WTC11 (cell line): ENCODE measurements at regions of chr1 and their contacts with region 1.

Region 1: DNA sequence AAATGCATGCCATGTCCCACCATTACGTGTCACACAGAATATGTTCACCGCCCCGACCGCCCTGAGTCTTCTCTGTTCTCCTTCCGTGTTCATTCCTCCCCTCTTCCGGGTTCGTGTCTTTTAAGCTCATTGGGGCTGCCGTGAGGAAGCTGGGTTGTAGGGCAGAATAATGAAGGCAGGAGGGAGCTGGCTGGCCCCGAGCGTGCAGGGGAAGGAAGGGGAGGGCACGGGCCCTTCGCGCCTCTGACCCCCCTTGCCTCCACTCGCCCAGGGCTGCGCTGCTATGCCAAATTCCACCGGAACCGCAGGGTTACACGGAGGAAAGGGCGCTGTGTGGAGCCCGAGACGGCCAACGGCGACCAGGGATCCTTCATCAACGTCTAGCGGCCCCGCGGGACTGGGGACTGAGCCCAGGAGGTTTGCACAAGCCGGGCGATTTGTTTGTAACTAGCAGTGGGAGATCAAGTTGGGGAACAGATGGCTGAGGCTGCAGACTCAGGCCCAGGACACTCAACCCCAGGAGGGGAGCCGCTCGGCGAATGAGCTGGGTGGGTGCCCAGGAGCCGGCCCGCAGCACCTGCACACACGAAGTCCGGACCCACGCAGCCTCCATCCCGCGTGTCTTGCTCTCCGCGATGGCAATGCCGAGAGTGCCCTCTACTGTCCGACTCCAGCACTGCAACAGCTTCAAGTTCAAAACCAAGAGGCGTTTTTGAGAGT is 16.5 kb upstream of the AGTRAP start:
- DNase-seq: peak; percentile 81
- ATAC-seq: peak; percentile 75
- H3K4me3 Mint-ChIP-seq: peak overlapping the region; percentile 51
- H3K27ac Mint-ChIP-seq: no peak overlapping the region
- H3K4me1 Mint-ChIP-seq: peaks cover 9% of the 10 kb centered on the region
- H3K27me3 Mint-ChIP-seq: no peaks in the 10 kb centered on the region; the same call in 1 of the 2 replicates
- CTCF ChIP-seq: peak; percentile 96

Region 2: DNA sequence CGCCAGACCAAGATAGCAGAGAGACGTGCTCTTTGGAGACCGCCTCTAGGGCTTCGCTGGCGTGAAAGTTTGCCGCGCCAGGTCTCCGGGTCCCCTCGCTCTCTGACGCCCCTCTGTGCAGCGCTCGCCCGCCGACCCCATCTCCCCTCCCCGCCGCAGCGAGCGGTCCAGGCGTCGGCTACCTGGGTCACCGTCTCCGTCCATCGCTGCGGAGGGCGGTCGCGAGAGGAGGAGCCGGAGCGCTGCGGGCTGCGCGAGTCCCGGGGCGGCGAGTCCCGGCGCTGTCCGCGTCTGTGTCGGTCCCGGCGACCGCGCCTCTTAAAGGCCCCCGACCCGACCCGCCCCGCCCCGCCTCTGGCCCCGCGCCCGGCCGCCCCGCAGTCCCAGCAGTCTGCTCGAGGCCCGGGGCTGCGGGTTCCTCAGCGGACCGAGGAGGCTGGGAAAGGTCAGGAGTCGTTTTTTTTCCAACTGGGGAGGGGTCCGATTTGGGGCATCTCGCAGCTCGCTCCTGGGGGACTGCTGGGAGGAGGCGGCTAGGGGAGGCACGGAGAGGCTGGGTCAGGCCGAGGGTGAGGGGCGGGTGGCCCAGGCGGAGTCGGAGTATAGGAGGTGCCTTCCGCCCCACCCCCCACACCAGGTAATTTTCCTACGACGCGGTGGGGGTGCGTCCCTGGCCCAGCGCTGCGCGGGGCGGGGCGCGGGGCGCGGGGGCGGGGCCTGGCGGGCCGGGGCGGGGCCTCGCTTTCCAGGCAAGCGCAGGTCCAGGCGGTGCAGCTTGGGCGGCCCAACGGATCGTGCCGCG is 65.1 kb before region 1 on chr1 and contains the starts of genes FBXO2 and FBXO44:
- CTCF ChIA-PET with region 1: interaction called, 22 read pairs
- POLR2A ChIA-PET with region 1: interaction called, 3 read pairs
- DNase-seq: peak; percentile 88
- ATAC-seq: peak; percentile 69
- H3K4me3 Mint-ChIP-seq: peak within 1 kb of the TSS; percentile 74
- H3K27ac Mint-ChIP-seq: no peak within 1 kb of the TSS
- H3K4me1 Mint-ChIP-seq: peaks cover 33% of the 10 kb centered on the region
- H3K27me3 Mint-ChIP-seq: peaks cover 22% of the 10 kb centered on the region
- CTCF ChIP-seq: no peak
- total RNA-seq, gene FBXO2: 58.2 to 68.2 TPM (median 63.7 TPM) in 3 replicates
- total RNA-seq, gene FBXO44: 34.9 to 45.6 TPM (median 40.6 TPM) in 3 replicates

Region 3: DNA sequence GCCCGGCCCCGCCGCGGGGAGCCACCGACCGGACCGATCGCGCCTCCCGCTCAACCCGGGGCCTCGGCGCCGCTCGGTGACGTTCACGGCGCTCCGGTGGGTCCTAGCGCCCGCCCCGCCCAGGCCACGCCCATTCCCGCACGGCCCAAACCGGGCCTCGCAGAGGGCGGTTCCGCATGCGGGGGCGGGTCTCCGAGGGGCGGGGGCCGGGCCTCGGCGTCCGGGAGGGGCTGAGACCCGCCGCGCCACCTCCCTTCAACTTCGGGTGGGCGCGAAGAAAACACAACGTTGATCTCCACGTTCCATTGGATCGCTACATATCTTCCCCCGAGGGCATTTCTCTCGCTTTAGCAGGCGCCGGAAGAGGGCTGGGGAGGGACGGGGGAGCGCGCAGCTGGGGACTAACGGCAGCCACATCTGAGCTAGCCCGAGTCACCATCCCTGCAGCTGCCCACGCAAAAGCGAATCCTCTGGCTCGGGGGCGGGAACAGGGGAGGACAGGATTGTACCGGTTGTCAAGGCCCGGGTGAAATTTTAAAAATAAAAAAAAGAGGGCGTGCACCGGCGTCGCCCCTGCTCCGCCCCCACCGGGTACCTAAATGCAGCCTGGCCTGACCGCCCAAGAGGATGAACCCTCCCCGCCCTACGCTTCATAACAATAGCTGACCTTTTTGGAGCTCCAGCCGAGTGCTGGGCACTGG is 38.3 kb before region 1 on chr1 and contains the start of gene MAD2L2:
- CTCF ChIA-PET with region 1: interaction called, 29 read pairs
- POLR2A ChIA-PET with region 1: interaction called, 3 read pairs
- DNase-seq: peak; percentile 86
- ATAC-seq: peak; percentile 54
- H3K4me3 Mint-ChIP-seq: peak within 1 kb of the TSS; percentile 83
- H3K27ac Mint-ChIP-seq: peak within 1 kb of the TSS; percentile 100
- H3K4me1 Mint-ChIP-seq: peaks cover 61% of the 10 kb centered on the region
- H3K27me3 Mint-ChIP-seq: no peaks in the 10 kb centered on the region
- CTCF ChIP-seq: no peak
- total RNA-seq, gene MAD2L2: 283 to 312 TPM (median 305 TPM) in 3 replicates

Region 4: DNA sequence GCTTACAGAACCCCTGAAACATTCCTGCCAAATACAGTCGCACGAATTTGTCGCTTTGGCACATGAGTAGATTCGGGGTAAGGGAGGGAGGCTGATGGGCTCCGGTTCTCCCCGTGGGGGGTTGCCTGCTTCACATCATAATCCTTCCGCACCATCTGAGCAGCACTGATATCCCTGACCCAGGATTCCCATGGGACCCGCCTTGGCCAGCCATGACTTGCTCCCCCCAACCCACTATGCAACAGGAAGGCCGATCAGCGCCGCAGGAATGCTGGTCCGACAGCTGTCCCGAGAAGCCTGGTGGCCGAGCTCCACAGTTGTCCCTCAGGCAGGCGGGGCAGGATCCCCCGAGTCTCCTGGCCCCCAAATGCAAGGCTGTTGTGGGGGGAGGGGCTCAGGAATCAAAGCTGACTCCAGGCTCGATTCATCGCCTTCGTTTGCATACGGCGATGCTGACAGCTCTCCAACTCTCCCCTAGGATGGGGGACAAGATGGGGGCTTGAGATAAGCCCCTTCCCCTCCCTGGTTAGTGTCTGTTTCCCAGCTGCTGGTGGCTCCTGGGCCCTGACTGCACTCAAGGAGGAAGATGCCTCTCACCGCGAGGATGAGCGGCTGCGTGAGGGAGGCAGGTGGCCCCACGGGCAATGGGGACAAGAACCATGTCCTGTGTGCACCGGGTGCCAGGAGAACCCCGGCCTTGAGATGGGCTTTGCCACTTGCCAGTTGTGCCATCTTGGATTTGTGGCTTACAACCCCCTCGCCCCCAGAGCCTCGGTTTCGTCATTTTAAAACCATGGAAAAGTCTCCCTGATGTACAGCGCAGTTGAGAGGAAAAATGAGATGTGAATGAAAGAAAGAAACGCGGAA is 18.6 kb before region 1 on chr1:
- CTCF ChIA-PET with region 1: interaction called, 13 read pairs
- POLR2A ChIA-PET with region 1: interaction called, 5 read pairs
- DNase-seq: peak; percentile 42
- ATAC-seq: no peak
- H3K4me3 Mint-ChIP-seq: 0 out of 2 replicates have a peak overlapping the region, but pooled peaks have one; percentile 7
- H3K27ac Mint-ChIP-seq: no peak overlapping the region
- H3K4me1 Mint-ChIP-seq: peaks cover 51% of the 10 kb centered on the region
- H3K27me3 Mint-ChIP-seq: no peaks in the 10 kb centered on the region
- CTCF ChIP-seq: no peak

Region 5: GRCh38 chr1:11735854-11736745 is 16.6 kb after region 1 on chr1 and contains the start of gene AGTRAP:
- CTCF ChIA-PET with region 1: interaction called, 17 read pairs
- POLR2A ChIA-PET with region 1: no interaction called
- DNase-seq: peak; percentile 98
- ATAC-seq: peak; percentile 73
- H3K4me3 Mint-ChIP-seq: peak within 1 kb of the TSS; percentile 94
- H3K27ac Mint-ChIP-seq: peak within 1 kb of the TSS; percentile 93
- H3K4me1 Mint-ChIP-seq: peaks cover 47% of the 10 kb centered on the region
- H3K27me3 Mint-ChIP-seq: no peaks in the 10 kb centered on the region; the same call in 1 of the 2 replicates
- CTCF ChIP-seq: no peak
- total RNA-seq, gene AGTRAP: 81.6 to 102 TPM (median 101 TPM) in 3 replicates